ENCODE measurements at regions of chr1 and their contacts with region 1.

Region 1: GRCh38 chr1:11391901-11392300 is 87.1 kb upstream of the DISP3 start:
- DNase-seq: no peak
- H3K4me3 Mint-ChIP-seq: no peak overlapping the region
- H3K27ac Mint-ChIP-seq: no peak overlapping the region
- H3K4me1 Mint-ChIP-seq: peaks cover 3% of the 10 kb centered on the region
- H3K27me3 Mint-ChIP-seq: peaks cover 19% of the 10 kb centered on the region

Region 2: GRCh38 chr1:11426617-11427016 is 34.7 kb after region 1 on chr1:
- intact Hi-C with region 1: loop called (anchors 2 kb)
- DNase-seq: no peak
- H3K4me3 Mint-ChIP-seq: no peak overlapping the region
- H3K27ac Mint-ChIP-seq: no peak overlapping the region
- H3K4me1 Mint-ChIP-seq: no peaks in the 10 kb centered on the region
- H3K27me3 Mint-ChIP-seq: peaks cover 4% of the 10 kb centered on the region

Measured in activated CD4-positive, alpha-beta T cell treated with anti-CD3 and anti-CD28 coated beads, Interleukin-2, amount 10 ng/mL, durations not matched to agents 24 days and 14 days (primary cell).